Posterior cingulate gyrus (tissue), 11 donors: ENCODE measurements at regions of chr5 and their contacts with region 1.

Region 1: GRCh38 chr5:91383027-91383955 is at the start of gene ARRDC3:
- DNase-seq: peak; percentile 91 to 99 (median 94)

Region 2: GRCh38 chr5:90866333-90866732 is 517.0 kb before region 1 on chr5:
- intact Hi-C with region 1: loop called (anchors 2 kb)
- DNase-seq: no peak

Region 3: GRCh38 chr5:91101600-91102379 is 281.5 kb before region 1 on chr5:
- intact Hi-C with region 1: loop called (anchors 2 kb)
- DNase-seq: peak in 9 of 10 donors; percentile 12 to 95 (median 65)

Region 4: GRCh38 chr5:91280362-91281269 is 102.7 kb before region 1 on chr5:
- intact Hi-C with region 1: loop called (anchors 2 kb)
- DNase-seq: peak; percentile 83 to 99 (median 91)

Region 5: DNA sequence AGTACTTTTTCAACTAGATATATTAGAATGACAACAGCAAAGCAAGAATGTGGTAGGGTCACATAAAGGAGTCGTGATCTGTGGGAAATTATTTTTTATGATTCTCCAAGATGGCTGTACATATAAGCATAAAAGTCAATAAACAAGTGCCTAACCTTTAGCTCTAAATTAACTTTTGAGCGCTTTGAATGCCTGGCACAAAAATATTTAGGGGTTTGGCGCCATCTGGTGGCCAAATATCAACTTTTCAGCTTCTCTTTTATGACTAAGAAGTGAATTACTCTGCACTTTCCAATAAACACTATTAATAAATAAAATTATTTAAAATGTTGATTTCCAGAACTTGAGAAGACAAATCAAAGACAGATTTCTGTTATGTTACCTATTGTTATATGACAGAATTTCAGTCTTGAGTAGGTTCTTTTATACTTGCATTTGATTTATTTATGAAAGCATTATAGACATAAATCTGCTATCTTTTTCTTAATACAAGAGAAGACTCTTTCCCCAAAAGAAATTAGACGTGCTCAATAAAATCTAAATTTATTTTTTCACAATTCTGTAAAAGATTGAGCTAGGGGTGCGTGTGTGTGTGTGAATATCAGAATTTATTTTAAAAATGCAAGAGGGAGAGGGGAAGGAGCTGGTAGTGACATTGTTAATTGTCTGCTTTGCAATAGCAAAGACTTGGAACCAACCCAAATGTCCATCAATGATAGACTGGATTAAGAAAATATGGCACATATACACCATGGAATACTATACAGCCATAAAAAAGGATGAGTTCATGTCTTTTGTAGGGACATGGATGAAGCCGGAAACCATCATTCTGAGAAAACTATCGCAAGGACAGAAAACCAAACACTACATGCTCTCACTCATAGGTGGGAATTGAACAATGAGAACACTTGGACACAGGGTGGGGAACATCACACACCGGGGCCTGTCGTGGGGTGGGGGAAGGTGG is 36.6 kb after region 1 on chr5:
- intact Hi-C with region 1: loop called (anchors 2 kb)
- DNase-seq: peak in 6 of 10 donors; percentile 35 to 83 (median 68)

Region 6: GRCh38 chr5:91607675-91608074 is 224.4 kb after region 1 on chr5:
- intact Hi-C with region 1: no loop called
- DNase-seq: no peak